IMR-90 (cell line): ENCODE measurements at regions of chr2 and their contacts with region 1.

Region 1: GRCh38 chr2:62456721-62457539 is 49.1 kb downstream of the TMEM17 start:
- DNase-seq: peak; percentile 78
- ATAC-seq: peak; percentile 98
- H3K4me3 ChIP-seq: peak overlapping the region; percentile 77
- H3K27ac ChIP-seq: peak overlapping the region; percentile 89
- H3K4me1 ChIP-seq: peaks cover 9% of the 10 kb centered on the region; the same call in 1 of the 2 replicates
- H3K27me3 ChIP-seq: no peaks in the 10 kb centered on the region
- CTCF ChIP-seq: peak; percentile 93
- POLR2A ChIP-seq: peak; percentile 45; the same call in 1 of the 2 replicates
- RAD21 ChIP-seq: peak; percentile 97

Region 2: GRCh38 chr2:62596061-62596921 is 139.4 kb after region 1 on chr2:
- CTCF ChIA-PET with region 1: no interaction called
- POLR2A ChIA-PET with region 1: no interaction called
- dilution Hi-C with region 1: no loop called
- in situ Hi-C with region 1: no loop called
- intact Hi-C with region 1: loop called (anchors 5 kb)
- DNase-seq: peak; percentile 81
- ATAC-seq: peak; percentile 78
- H3K4me3 ChIP-seq: no peak overlapping the region
- H3K27ac ChIP-seq: peak overlapping the region; percentile 60; the same call in 1 of the 2 replicates
- H3K4me1 ChIP-seq: peaks cover 5% of the 10 kb centered on the region
- H3K27me3 ChIP-seq: no peaks in the 10 kb centered on the region
- CTCF ChIP-seq: no peak
- POLR2A ChIP-seq: no peak
- RAD21 ChIP-seq: no peak

Region 3: DNA sequence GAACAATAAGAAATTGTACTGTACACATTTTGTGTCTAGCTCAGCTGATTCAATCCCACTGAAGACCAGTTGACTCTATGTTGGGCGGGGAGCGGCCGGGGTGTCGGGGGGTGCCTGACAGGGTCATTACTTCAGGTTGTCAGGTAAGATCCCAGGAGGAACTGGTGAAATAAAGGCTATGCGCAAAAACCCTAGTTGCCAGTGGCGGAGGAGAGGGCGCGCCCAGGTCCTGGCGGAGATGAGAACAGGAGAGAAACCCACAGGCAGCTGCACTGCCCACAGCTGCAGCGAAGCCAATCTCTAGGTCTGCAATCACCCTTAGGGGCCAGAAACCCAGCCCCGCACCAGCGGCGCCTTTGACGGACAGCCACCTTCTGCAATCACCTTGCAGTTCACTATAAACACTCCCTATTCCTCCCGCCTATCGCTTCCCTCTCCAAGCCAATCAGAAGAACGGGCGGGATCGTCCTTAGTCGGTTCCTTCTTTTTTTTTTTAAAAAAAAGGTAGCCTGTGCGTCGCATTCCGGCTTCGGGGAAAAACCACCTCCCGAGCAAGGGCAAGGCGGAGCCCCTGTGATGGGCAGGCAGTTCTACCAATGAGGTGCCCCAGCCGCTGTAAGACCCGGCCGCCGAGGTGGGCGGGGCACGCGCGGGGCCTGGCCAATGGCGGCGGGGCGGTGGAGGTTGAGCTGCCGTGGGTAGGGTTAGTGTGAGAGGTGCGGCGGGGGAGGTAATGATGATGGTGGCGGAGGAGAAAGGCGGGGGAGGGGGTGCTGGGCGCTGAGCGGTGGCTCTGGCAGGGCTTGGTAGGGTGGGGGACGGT is 248.3 kb after region 1 on chr2 and contains the start of gene EHBP1:
- CTCF ChIA-PET with region 1: no interaction called
- POLR2A ChIA-PET with region 1: no interaction called
- dilution Hi-C with region 1: no loop called
- in situ Hi-C with region 1: no loop called
- intact Hi-C with region 1: loop called (anchors 1 kb)
- DNase-seq: peak; percentile 100
- ATAC-seq: peak; percentile 96
- H3K4me3 ChIP-seq: peak within 1 kb of the TSS; percentile 83
- H3K27ac ChIP-seq: peak within 1 kb of the TSS; percentile 84
- H3K4me1 ChIP-seq: peaks cover 4% of the 10 kb centered on the region; the same call in 1 of the 2 replicates
- H3K27me3 ChIP-seq: no peaks in the 10 kb centered on the region
- CTCF ChIP-seq: no peak
- POLR2A ChIP-seq: 0 out of 2 replicates have a peak, but pooled peaks have one; percentile 37
- RAD21 ChIP-seq: no peak; the same call in 1 of the 2 replicates
- total RNA-seq, gene EHBP1: 44.4 and 55.0 TPM in 2 replicates

Region 4: GRCh38 chr2:63049970-63050333 is 593.0 kb after region 1 on chr2:
- CTCF ChIA-PET with region 1: no interaction called
- POLR2A ChIA-PET with region 1: no interaction called
- dilution Hi-C with region 1: no loop called
- in situ Hi-C with region 1: loop called (anchors 25 kb)
- intact Hi-C with region 1: no loop called
- DNase-seq: peak; percentile 8
- ATAC-seq: peak; percentile 55
- H3K4me3 ChIP-seq: peak overlapping the region; percentile 61
- H3K27ac ChIP-seq: no peak overlapping the region
- H3K4me1 ChIP-seq: peaks cover 5% of the 10 kb centered on the region
- H3K27me3 ChIP-seq: peaks cover 71% of the 10 kb centered on the region
- CTCF ChIP-seq: no peak
- POLR2A ChIP-seq: no peak
- RAD21 ChIP-seq: no peak

Region 5: DNA sequence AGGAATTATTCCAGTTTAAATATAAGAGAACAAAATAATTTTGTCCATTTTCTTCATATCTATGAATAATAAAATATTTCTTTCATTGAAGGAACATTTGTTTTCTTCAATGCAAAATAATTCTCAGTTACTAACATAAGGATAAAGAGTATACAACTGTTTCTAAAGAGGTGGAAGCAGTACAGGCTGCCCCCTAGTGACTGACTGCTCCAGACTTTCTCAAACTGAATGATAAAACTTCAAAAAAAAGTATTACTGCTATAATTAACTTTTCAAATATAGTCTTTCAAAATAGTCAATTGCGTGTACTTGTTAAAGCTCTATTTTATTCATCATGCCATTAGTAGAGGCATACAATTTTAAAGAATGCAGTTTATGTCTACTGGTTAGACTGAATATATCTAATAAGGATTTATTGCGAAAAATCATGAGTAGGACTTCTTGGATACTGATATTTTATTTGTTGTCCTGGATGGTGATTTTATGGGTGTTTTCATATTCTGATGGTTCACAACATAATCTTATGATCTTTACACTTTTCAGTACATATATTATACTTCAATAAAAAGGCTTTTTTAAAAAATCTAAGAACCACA is 1031.3 kb after region 1 on chr2:
- CTCF ChIA-PET with region 1: no interaction called
- POLR2A ChIA-PET with region 1: no interaction called
- dilution Hi-C with region 1: no loop called
- in situ Hi-C with region 1: loop called (anchors 25 kb)
- intact Hi-C with region 1: loop called (anchors 5 kb)
- DNase-seq: peak; percentile 46
- ATAC-seq: peak; percentile 74; the same call in 1 of the 2 replicates
- H3K4me3 ChIP-seq: no peak overlapping the region
- H3K27ac ChIP-seq: no peak overlapping the region
- H3K4me1 ChIP-seq: no peaks in the 10 kb centered on the region
- H3K27me3 ChIP-seq: no peaks in the 10 kb centered on the region
- CTCF ChIP-seq: peak; percentile 69
- POLR2A ChIP-seq: no peak
- RAD21 ChIP-seq: peak; percentile 68

Region 6: DNA sequence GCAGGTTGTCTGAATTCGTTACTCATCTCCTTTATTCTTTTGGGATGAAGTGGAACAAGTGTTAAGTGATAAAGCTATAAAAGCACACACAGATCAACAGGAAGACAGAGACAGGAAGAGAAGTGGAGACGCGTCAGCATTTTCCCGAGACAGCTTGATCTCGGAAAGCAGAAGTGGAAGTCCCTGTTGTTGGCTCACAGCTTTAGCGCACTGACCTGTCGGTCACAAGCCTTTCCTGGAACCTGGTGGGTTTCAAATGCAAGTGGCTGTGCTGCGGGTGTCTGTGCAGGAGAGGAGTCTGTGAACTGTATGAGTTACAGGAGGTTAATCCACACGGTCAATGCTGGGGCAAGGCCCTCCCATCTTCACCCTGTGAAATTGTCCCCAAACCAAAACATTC is 1803.9 kb after region 1 on chr2:
- CTCF ChIA-PET with region 1: no interaction called
- POLR2A ChIA-PET with region 1: no interaction called
- dilution Hi-C with region 1: no loop called
- in situ Hi-C with region 1: no loop called
- intact Hi-C with region 1: no loop called
- DNase-seq: no peak
- ATAC-seq: no peak
- H3K4me3 ChIP-seq: no peak overlapping the region
- H3K27ac ChIP-seq: no peak overlapping the region
- H3K4me1 ChIP-seq: no peaks in the 10 kb centered on the region
- H3K27me3 ChIP-seq: peaks cover 5% of the 10 kb centered on the region
- CTCF ChIP-seq: no peak
- POLR2A ChIP-seq: no peak
- RAD21 ChIP-seq: no peak